ENCODE measurements at regions of chr1 and their contacts with region 1.

Region 1: GRCh38 chr1:235504496-235505222 is 407 bp upstream of the B3GALNT2 start:
- DNase-seq: peak; percentile 99
- ATAC-seq: peak; percentile 89
- H3K4me3 Mint-ChIP-seq: peak overlapping the region; percentile 93
- H3K27ac Mint-ChIP-seq: peak overlapping the region; percentile 98
- H3K4me1 Mint-ChIP-seq: peaks cover 30% of the 10 kb centered on the region
- H3K27me3 Mint-ChIP-seq: no peaks in the 10 kb centered on the region

Region 2: GRCh38 chr1:234499119-234499942 is 1005.3 kb before region 1 on chr1:
- CTCF ChIA-PET with region 1: no interaction called
- POLR2A ChIA-PET with region 1: no interaction called
- intact Hi-C with region 1: loop called in 1 of 2 experiments (anchors 5 kb)
- DNase-seq: peak; percentile 93
- ATAC-seq: peak; percentile 54
- H3K4me3 Mint-ChIP-seq: no peak overlapping the region
- H3K27ac Mint-ChIP-seq: peak overlapping the region; percentile 80
- H3K4me1 Mint-ChIP-seq: peaks cover 76% of the 10 kb centered on the region
- H3K27me3 Mint-ChIP-seq: peaks cover 3% of the 10 kb centered on the region

Region 3: GRCh38 chr1:235128456-235129328 is 376.0 kb before region 1 on chr1 and contains the start of gene TOMM20:
- CTCF ChIA-PET with region 1: no interaction called
- POLR2A ChIA-PET with region 1: interaction called, 3 read pairs
- intact Hi-C with region 1: loop called in 1 of 2 experiments (anchors 1 kb)
- DNase-seq: peak; percentile 97
- ATAC-seq: peak; percentile 92
- H3K4me3 Mint-ChIP-seq: peak within 1 kb of the TSS; percentile 90
- H3K27ac Mint-ChIP-seq: peak within 1 kb of the TSS; percentile 98
- H3K4me1 Mint-ChIP-seq: peaks cover 41% of the 10 kb centered on the region
- H3K27me3 Mint-ChIP-seq: no peaks in the 10 kb centered on the region
- total RNA-seq, gene TOMM20: 62.1 to 148 TPM

Region 4: GRCh38 chr1:235367000-235367908 is 137.4 kb before region 1 on chr1 and contains the start of gene TBCE:
- CTCF ChIA-PET with region 1: no interaction called
- POLR2A ChIA-PET with region 1: no interaction called
- intact Hi-C with region 1: loop called in 1 of 2 experiments (anchors 2 kb)
- DNase-seq: peak; percentile 92
- ATAC-seq: peak; percentile 98
- H3K4me3 Mint-ChIP-seq: peak within 1 kb of the TSS; percentile 98
- H3K27ac Mint-ChIP-seq: peak within 1 kb of the TSS; percentile 93
- H3K4me1 Mint-ChIP-seq: peaks cover 22% of the 10 kb centered on the region
- H3K27me3 Mint-ChIP-seq: no peaks in the 10 kb centered on the region
- total RNA-seq, gene TBCE: 22.3 to 26.1 TPM

Region 5: DNA sequence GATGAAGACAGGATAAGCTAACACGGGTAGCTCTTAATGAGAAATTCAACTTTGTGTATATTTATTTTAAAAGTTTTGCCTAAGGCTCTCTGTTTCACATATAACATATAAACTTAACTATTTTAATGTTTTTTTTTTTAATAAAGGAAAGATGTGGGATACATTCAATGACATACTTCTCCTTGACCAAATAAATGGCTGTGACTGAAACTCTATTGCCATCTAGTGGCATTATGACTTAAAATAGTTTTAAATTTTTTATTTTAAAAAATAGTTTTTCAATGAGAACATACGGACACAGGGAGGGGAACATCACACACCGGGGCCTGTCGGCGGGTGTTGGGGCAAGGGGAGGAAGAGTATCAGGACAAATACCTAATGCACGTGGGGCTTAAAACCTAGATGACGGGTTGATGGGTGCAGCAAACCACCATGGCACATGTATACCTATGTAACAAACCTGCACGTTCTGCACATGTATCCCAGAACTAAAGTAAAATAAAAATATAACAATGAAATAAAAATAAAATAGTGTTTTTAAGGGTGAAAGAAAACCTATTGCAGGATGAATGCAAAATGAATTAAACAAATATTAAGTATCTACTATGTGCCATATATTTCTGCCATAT is 278.6 kb after region 1 on chr1:
- CTCF ChIA-PET with region 1: interaction called, 11 read pairs
- POLR2A ChIA-PET with region 1: no interaction called
- intact Hi-C with region 1: no loop called
- DNase-seq: no peak
- ATAC-seq: no peak
- H3K4me3 Mint-ChIP-seq: no peak overlapping the region
- H3K27ac Mint-ChIP-seq: no peak overlapping the region
- H3K4me1 Mint-ChIP-seq: no peaks in the 10 kb centered on the region
- H3K27me3 Mint-ChIP-seq: no peaks in the 10 kb centered on the region

Region 6: GRCh38 chr1:235999259-235999925 is 494.7 kb after region 1 on chr1:
- CTCF ChIA-PET with region 1: no interaction called
- POLR2A ChIA-PET with region 1: no interaction called
- intact Hi-C with region 1: loop called (anchors 1 kb)
- DNase-seq: peak; percentile 76
- ATAC-seq: peak; percentile 85
- H3K4me3 Mint-ChIP-seq: peak overlapping the region; percentile 32
- H3K27ac Mint-ChIP-seq: peak overlapping the region; percentile 94
- H3K4me1 Mint-ChIP-seq: peaks cover 58% of the 10 kb centered on the region
- H3K27me3 Mint-ChIP-seq: no peaks in the 10 kb centered on the region

Region 7: GRCh38 chr1:236795035-236795756 is 1290.5 kb after region 1 on chr1 and contains the start of gene MTR:
- CTCF ChIA-PET with region 1: no interaction called
- POLR2A ChIA-PET with region 1: no interaction called
- intact Hi-C with region 1: loop called (anchors 2 to 10 kb)
- DNase-seq: peak; percentile 98
- ATAC-seq: peak; percentile 95
- H3K4me3 Mint-ChIP-seq: peak within 1 kb of the TSS; percentile 97
- H3K27ac Mint-ChIP-seq: peak within 1 kb of the TSS; percentile 100
- H3K4me1 Mint-ChIP-seq: peaks cover 33% of the 10 kb centered on the region
- H3K27me3 Mint-ChIP-seq: peaks cover 2% of the 10 kb centered on the region
- total RNA-seq, gene MTR: 57.3 to 64.8 TPM

Region 8: DNA sequence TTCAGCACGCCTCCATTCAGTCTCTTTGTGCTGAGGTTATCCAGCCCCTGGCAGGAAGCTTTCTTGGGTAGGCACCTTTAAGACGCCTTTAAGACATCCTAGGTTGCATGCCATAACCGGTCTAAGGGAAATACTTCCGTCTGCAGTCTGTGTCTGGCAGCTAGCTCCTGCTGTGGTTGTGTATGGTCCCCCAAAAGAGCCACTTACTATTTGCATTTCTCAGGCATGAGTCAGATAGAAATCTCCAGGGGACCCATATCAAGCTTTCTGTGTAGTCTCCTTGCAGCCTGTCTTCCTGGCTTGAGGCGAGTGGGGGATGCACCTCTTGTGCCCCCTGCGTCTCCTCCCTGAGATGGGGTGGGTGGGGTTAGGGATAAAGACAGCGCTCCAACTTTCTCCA is 1527.4 kb after region 1 on chr1:
- CTCF ChIA-PET with region 1: no interaction called
- POLR2A ChIA-PET with region 1: no interaction called
- intact Hi-C with region 1: no loop called
- DNase-seq: no peak
- ATAC-seq: no peak
- H3K4me3 Mint-ChIP-seq: no peak overlapping the region
- H3K27ac Mint-ChIP-seq: no peak overlapping the region
- H3K4me1 Mint-ChIP-seq: no peaks in the 10 kb centered on the region
- H3K27me3 Mint-ChIP-seq: peaks cover 15% of the 10 kb centered on the region